Activated CD4-positive, alpha-beta T cell treated with anti-CD3 and anti-CD28 coated beads for 36 hours (primary cell): ENCODE measurements at regions of chr15 and their contacts with region 1.

Region 1: DNA sequence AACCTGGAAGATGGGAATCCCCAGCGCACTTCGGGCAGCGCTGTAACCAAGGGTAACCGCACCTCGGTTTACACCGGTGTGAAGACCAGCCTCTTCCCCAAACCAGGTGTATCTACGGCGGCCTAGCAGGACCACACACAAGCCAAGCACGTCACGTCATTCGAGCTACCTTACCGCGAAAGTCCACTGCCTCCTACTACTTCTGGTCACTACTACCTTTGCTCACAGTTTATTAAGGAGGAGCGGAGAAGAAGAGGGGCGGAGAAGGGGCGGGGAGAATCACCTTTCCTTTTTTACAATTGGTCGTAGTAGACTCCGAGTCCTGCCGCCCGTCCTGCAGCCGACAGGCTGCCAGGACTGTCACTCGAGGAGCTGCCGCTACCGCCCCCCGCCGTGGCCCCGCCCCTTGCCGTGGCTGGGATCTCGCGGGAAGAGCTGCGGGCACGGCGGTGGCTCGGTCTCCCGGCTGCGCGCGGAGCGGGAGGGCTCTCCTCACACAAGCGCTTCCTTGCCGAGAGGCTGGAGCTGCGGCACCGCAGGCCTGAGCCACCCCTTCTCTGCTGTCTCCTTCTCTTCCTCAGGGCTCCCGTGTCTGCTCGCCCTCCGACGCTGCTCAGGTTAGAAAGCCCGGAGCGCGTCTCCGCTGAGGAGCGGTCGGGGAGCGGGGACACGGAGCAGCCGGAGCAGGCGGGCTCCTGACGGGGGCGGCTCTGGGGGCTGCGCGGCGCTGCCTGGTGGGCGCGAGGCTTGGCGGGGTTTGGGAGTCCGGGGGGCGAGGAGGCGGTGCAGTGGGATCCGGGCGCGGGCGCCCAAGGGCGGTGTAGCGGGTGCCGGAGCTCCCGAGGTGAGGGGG is at the start of gene GLCE:
- DNase-seq: peak; percentile 96
- ATAC-seq: peak; percentile 98
- H3K4me3 Mint-ChIP-seq: peak within 1 kb of the TSS; percentile 90
- H3K27ac Mint-ChIP-seq: peak within 1 kb of the TSS; percentile 84
- H3K4me1 Mint-ChIP-seq: peaks cover 16% of the 10 kb centered on the region
- H3K27me3 Mint-ChIP-seq: no peaks in the 10 kb centered on the region
- total RNA-seq, gene GLCE: 3.6 to 4.2 TPM

Region 2: GRCh38 chr15:68277603-68278344 is 882.6 kb before region 1 on chr15 and contains the start of gene FEM1B:
- CTCF ChIA-PET with region 1: no interaction called
- POLR2A ChIA-PET with region 1: no interaction called
- intact Hi-C with region 1: loop called in 1 of 2 experiments (anchors 5 kb)
- DNase-seq: peak; percentile 94
- ATAC-seq: peak; percentile 79
- H3K4me3 Mint-ChIP-seq: peak within 1 kb of the TSS; percentile 99
- H3K27ac Mint-ChIP-seq: peak within 1 kb of the TSS; percentile 99
- H3K4me1 Mint-ChIP-seq: peaks cover 43% of the 10 kb centered on the region
- H3K27me3 Mint-ChIP-seq: no peaks in the 10 kb centered on the region
- total RNA-seq, gene FEM1B: 41.1 to 50.0 TPM

Region 3: GRCh38 chr15:69058830-69059556 is 101.4 kb before region 1 on chr15:
- CTCF ChIA-PET with region 1: no interaction called
- POLR2A ChIA-PET with region 1: no interaction called
- intact Hi-C with region 1: loop called in 1 of 2 experiments (anchors 2 kb)
- DNase-seq: peak; percentile 86
- ATAC-seq: peak; percentile 55
- H3K4me3 Mint-ChIP-seq: no peak overlapping the region
- H3K27ac Mint-ChIP-seq: no peak overlapping the region
- H3K4me1 Mint-ChIP-seq: peaks cover 21% of the 10 kb centered on the region
- H3K27me3 Mint-ChIP-seq: peaks cover 13% of the 10 kb centered on the region

Region 4: DNA sequence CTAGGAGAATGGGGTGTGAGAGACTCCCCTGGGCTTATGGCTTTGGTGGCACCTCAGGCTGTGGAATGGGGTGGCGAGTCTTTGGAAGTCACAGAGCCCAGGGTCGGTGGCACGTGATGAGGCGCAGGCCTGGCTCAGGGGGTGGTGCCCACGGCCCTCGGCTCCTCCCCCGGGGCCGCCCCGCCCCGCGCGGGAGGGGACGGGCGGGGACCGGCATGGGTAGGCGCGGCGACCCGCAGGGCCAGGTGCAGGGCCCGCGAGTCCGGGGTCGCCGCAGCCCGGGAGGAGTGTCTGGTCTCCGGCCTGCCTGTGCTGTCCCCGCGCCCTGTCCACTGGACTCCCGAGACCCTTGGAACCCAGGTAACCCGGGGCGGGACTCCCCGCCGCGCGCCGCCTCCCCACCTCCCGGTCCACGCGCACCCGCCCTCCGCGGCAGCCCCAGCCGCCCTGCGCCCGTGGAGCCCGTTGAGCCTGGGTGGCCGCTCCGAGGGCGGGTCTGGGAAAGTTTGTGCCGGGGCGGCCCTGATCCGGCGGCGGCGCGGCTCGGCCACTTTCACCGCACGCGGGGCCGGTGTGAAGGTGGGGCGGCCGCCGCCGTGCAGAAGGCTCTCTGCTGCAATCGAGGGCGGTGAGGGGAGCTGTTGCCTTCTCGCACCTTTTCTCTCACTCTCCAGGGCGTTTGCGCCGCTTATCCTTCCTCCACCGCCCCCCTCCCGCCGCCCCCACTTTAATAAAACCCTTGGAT is 138.5 kb after region 1 on chr15 and contains the start of gene PAQR5:
- CTCF ChIA-PET with region 1: no interaction called
- POLR2A ChIA-PET with region 1: no interaction called
- intact Hi-C with region 1: loop called in 1 of 2 experiments (anchors 2 kb)
- DNase-seq: peak; percentile 36
- ATAC-seq: peak; percentile 88
- H3K4me3 Mint-ChIP-seq: no peak within 1 kb of the TSS
- H3K27ac Mint-ChIP-seq: no peak within 1 kb of the TSS
- H3K4me1 Mint-ChIP-seq: peaks cover 3% of the 10 kb centered on the region
- H3K27me3 Mint-ChIP-seq: peaks cover 48% of the 10 kb centered on the region
- total RNA-seq, gene PAQR5: 0.05 TPM in 1 of 2 experiments, not detected in the other

Region 5: DNA sequence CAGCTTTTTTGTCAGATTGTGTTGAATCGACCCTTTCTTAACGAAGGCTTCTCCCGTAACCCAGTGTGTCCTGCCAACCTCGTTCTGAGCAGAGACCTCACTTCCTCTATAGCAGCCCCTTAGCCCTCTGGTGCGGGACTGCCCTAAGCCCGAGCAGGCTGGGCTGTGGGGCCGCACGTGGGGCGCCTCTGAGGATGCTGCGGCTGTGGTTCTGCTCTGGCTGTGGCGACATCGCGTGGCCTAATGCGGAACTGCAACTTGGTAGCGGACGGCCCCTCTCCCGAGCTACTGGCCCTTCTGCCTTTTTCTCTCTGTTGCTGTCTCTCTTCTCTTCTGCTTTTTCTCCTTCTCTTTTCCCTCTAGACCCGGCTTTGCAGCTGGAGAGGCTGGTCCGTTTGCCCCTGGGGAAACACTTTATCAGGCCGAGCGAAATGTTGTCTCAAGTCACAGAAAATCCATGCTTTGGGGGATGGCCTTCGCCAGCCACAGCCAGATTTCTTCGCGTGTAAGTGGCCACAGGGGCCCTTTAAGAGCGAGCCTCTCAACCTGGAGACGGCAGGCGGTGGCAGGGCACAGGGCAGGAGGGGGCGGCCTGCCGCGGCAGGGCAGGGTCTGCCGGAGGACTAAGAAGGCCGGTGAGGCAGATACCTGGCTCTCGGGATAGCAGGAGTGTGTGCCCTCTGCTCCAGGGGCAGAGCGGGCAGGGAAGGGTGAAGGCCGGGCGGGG is 234.4 kb after region 1 on chr15:
- CTCF ChIA-PET with region 1: no interaction called
- POLR2A ChIA-PET with region 1: no interaction called
- intact Hi-C with region 1: loop called (anchors 2 to 5 kb)
- DNase-seq: peak; percentile 91
- ATAC-seq: peak; percentile 95
- H3K4me3 Mint-ChIP-seq: no peak overlapping the region
- H3K27ac Mint-ChIP-seq: no peak overlapping the region
- H3K4me1 Mint-ChIP-seq: peaks cover 10% of the 10 kb centered on the region
- H3K27me3 Mint-ChIP-seq: no peaks in the 10 kb centered on the region

Region 6: DNA sequence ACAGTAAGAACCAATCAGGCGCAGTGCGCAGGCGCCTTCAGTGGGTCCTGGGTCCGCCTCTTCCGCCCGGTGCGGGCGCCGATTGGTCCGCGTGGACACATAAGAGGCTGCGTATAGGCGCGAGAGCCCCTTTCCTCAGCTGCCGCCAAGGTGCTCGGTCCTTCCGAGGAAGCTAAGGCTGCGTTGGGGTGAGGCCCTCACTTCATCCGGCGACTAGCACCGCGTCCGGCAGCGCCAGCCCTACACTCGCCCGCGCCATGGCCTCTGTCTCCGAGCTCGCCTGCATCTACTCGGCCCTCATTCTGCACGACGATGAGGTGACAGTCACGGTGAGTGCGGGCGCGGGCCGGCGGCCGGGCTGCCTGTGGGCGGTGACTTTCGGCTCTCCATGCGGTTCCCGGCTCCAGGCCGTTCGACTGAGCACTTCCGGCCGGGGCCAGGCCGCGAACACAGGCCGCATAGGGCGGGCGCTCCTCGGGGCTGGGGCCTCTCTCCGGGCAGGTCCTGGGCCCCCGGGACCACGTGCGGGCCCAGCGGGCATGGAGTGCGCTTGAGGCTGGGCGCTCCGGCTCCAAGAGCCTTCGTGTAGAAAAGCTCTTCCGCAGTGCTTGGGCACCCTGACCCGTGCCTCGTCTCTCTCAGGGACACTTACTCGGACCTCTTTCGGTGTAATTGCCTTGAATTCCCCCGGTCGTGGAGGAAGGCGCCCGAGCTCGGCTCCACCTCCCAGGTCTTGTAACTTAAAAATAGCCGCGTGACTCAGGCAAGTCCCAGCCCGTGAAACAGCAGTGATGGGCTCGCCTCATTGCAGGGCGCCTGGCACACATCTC is 292.5 kb after region 1 on chr15 and contains the start of gene RPLP1:
- CTCF ChIA-PET with region 1: no interaction called
- POLR2A ChIA-PET with region 1: interaction called, 3 read pairs
- intact Hi-C with region 1: loop called (anchors 1 kb)
- DNase-seq: peak; percentile 97
- ATAC-seq: peak; percentile 94
- H3K4me3 Mint-ChIP-seq: peak within 1 kb of the TSS; percentile 91
- H3K27ac Mint-ChIP-seq: peak within 1 kb of the TSS; percentile 99
- H3K4me1 Mint-ChIP-seq: peaks cover 24% of the 10 kb centered on the region
- H3K27me3 Mint-ChIP-seq: no peaks in the 10 kb centered on the region
- total RNA-seq, gene RPLP1: 1,576 to 2,330 TPM